ENCODE measurements at regions of chr6 and their contacts with region 1.

Region 1: GRCh38 chr6:93419304-93420162 is at the start of gene EPHA7:
- DNase-seq: peak; percentile 95
- ATAC-seq: peak; percentile 93
- total RNA-seq, gene EPHA7: 1.5 TPM

Region 2: DNA sequence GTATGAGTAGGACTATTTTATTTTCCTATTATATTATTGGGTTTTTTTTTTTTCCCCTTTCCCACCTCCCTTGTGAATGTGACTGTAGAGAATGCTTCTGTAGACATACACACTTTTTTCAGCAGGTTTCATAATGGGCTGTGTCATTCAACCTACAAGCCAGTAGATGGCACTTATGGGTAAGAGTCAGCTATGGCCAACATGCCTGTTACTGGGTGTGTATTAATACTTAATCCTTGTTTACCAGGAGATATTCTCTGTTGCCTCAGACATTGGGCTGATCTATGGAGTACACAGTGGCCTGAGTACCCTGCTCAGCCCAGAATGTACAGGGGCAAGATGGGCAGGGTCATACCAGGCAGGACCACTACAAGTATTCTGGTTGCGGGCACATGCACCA is 382.7 kb before region 1 on chr6:
- intact Hi-C with region 1: loop called (anchors 10 kb)
- DNase-seq: no peak
- ATAC-seq: no peak

Region 3: GRCh38 chr6:93468291-93468690 is 48.8 kb after region 1 on chr6:
- intact Hi-C with region 1: no loop called
- DNase-seq: no peak
- ATAC-seq: no peak

Region 4: GRCh38 chr6:93567164-93567563 is 147.6 kb after region 1 on chr6:
- intact Hi-C with region 1: no loop called
- DNase-seq: no peak
- ATAC-seq: peak; percentile 22

Region 5: GRCh38 chr6:93684339-93684738 is 264.8 kb after region 1 on chr6:
- intact Hi-C with region 1: no loop called
- DNase-seq: no peak
- ATAC-seq: no peak